ENCODE measurements at regions of chr1 and their contacts with region 1.

Region 1: GRCh38 chr1:23539698-23540266 is 8.7 kb upstream of the E2F2 start:
- DNase-seq: peak; percentile 98
- H3K4me3 ChIP-seq: peak overlapping the region in 2 of 7 experiments; percentile 29 to 58
- H3K27ac ChIP-seq: no peak overlapping the region
- H3K4me1 ChIP-seq: peaks cover 3 to 8% (median 6%) of the 10 kb centered on the region in 4 experiments
- H3K27me3 ChIP-seq: no peaks in the 10 kb centered on the region

Region 2: DNA sequence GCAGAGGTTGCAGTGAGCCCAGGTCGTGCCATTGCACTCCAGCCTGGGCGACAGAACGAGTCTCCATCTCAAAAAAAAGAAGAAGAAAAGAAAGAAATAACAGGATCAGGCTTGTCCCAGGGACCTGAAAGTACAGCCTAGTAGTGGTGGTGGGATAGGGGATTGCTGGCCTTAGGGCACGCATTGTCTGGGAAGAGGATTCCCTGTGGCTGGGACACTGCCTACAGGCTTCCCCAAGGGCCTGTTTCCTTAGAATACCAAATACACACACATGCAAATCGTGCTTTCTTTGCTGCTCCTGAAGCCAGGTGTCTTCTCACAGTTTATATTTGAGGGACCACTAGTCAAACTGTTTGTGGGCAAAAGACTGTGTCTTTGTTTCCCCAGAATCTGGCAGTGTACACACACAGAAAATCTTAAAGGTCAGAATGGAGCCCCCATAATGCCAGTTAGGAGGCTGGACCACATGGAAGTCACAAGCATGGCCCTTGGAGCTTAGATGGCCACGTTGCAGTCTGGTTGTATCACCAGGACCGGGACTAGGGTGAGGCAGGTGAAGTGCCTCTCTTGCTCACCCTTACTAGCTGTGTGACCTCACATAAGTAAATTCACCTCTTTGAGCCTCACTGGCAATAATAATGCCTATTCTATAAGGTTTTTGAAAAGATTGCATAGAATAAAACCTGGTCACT is 43.1 kb before region 1 on chr1:
- CTCF ChIA-PET with region 1: interaction called, 183 read pairs
- POLR2A ChIA-PET with region 1: interaction called, 5 read pairs
- DNase-seq: no peak
- H3K4me3 ChIP-seq: no peak overlapping the region
- H3K27ac ChIP-seq: no peak overlapping the region
- H3K4me1 ChIP-seq: peaks cover 0 to 3% (median 1%) of the 10 kb centered on the region in 4 experiments
- H3K27me3 ChIP-seq: no peaks in the 10 kb centered on the region

Region 3: DNA sequence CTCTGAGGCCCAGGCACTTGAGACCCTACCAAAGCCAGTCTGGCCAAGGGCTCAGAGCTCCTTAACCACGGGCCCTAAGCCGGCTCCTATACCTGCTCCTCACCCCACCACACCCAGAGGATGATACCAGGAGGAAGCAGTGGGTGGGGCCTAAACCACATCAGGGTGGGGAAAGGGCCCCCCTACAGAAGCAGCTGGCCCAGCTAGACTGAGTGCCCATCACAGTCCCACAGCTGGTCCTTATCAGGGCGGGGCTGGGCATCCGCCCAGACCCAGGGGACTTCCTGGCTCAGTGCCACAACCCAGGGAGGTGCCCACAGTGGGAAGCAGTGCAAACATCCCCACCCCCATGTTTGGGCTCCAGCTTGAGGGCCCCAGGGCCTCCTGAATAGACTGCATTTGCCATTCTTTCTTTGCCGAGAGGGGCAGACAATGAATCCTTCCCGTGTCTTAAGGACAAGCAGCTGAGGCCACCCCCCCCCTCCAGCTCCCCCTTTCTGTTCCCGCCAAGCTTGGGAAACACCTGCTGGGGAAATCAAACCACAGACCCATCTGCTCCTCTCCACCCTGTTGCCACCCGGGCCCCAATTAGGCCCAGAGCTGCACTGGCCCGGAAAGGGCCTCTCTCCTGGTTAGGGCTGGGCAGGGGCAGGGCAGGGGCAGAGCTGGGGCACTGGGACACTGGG is 14.9 kb before region 1 on chr1:
- CTCF ChIA-PET with region 1: interaction called, 32 read pairs
- POLR2A ChIA-PET with region 1: no interaction called
- DNase-seq: peak; percentile 73 to 94 (median 93)
- H3K4me3 ChIP-seq: peak overlapping the region in 4 of 7 experiments; percentile 28 to 50 (median 40)
- H3K27ac ChIP-seq: peak overlapping the region in 1 of 2 experiments; percentile 60
- H3K4me1 ChIP-seq: peaks cover 29 to 66% (median 61%) of the 10 kb centered on the region in 4 experiments
- H3K27me3 ChIP-seq: no peaks in the 10 kb centered on the region

Region 4: GRCh38 chr1:23568608-23569383 is 29.0 kb after region 1 on chr1:
- CTCF ChIA-PET with region 1: interaction called, 10 read pairs
- POLR2A ChIA-PET with region 1: no interaction called
- DNase-seq: no peak
- H3K4me3 ChIP-seq: peak overlapping the region in 3 of 7 experiments; percentile 40 to 43 (median 42)
- H3K27ac ChIP-seq: peak overlapping the region in 1 of 2 experiments; percentile 54
- H3K4me1 ChIP-seq: peaks cover 0 to 18% (median 11%) of the 10 kb centered on the region in 4 experiments
- H3K27me3 ChIP-seq: peaks cover 0 to 70% (median 33%) of the 10 kb centered on the region in 5 experiments

Region 5: GRCh38 chr1:23643736-23644554 is 104.2 kb after region 1 on chr1:
- CTCF ChIA-PET with region 1: interaction called, 405 read pairs
- POLR2A ChIA-PET with region 1: no interaction called
- DNase-seq: no peak
- H3K4me3 ChIP-seq: no peak overlapping the region
- H3K27ac ChIP-seq: no peak overlapping the region
- H3K4me1 ChIP-seq: peaks cover 0 to 11% (median 8%) of the 10 kb centered on the region in 4 experiments
- H3K27me3 ChIP-seq: peaks cover 0 to 7% (median 0%) of the 10 kb centered on the region in 5 experiments